ENCODE measurements at regions of chr5 and their contacts with region 1.

Region 1: GRCh38 chr5:173802670-173803165 is 85.4 kb upstream of the CPEB4 start:
- DNase-seq: peak; percentile 95
- ATAC-seq: peak; percentile 84
- H3K4me3 ChIP-seq: peak overlapping the region in 1 of 3 experiments; percentile 36; a peak in 1 of 6 replicates
- H3K27ac ChIP-seq: peak overlapping the region; percentile 58
- H3K4me1 ChIP-seq: peaks cover 87% of the 10 kb centered on the region
- H3K27me3 ChIP-seq: no peaks in the 10 kb centered on the region
- CTCF ChIP-seq: 0 out of 2 replicates have a peak, but pooled peaks have one; percentile 12
- EP300 ChIP-seq: peak; percentile 92 to 96
- POLR2A ChIP-seq: peak in 1 of 2 experiments; percentile 32; a peak in 1 of 4 replicates
- RAD21 ChIP-seq: peak; percentile 37; the same call in 1 of the 2 replicates

Region 2: GRCh38 chr5:173745123-173745522 is 57.6 kb before region 1 on chr5:
- CTCF ChIA-PET with region 1: no interaction called
- POLR2A ChIA-PET with region 1: no interaction called
- in situ Hi-C with region 1: no loop called
- intact Hi-C with region 1: no loop called
- DNase-seq: no peak
- ATAC-seq: no peak
- H3K4me3 ChIP-seq: peak overlapping the region; percentile 14 to 44 (median 30); a peak in 4 of 6 replicates
- H3K27ac ChIP-seq: no peak overlapping the region
- H3K4me1 ChIP-seq: peaks cover 52% of the 10 kb centered on the region
- H3K27me3 ChIP-seq: no peaks in the 10 kb centered on the region
- CTCF ChIP-seq: no peak
- EP300 ChIP-seq: no peak
- POLR2A ChIP-seq: no peak
- RAD21 ChIP-seq: no peak

Region 3: GRCh38 chr5:173789031-173789920 is 13.4 kb before region 1 on chr5:
- CTCF ChIA-PET with region 1: no interaction called
- POLR2A ChIA-PET with region 1: interaction called, 17 read pairs
- in situ Hi-C with region 1: no loop called
- intact Hi-C with region 1: no loop called
- DNase-seq: peak; percentile 79
- ATAC-seq: peak; percentile 86
- H3K4me3 ChIP-seq: peak overlapping the region in 2 of 3 experiments; percentile 8 to 48; a peak in 2 of 6 replicates
- H3K27ac ChIP-seq: peak overlapping the region; percentile 73
- H3K4me1 ChIP-seq: peaks cover 68% of the 10 kb centered on the region
- H3K27me3 ChIP-seq: no peaks in the 10 kb centered on the region
- CTCF ChIP-seq: no peak
- EP300 ChIP-seq: peak in 1 of 2 experiments; percentile 82; a peak in 2 of 4 replicates
- POLR2A ChIP-seq: no peak
- RAD21 ChIP-seq: no peak; the same call in 1 of the 2 replicates

Measured in HepG2 (cell line).